ENCODE measurements at regions of chr7 and their contacts with region 1.

Region 1: GRCh38 chr7:130941322-130942210 is 207.6 kb upstream of the KLF14 start:
- DNase-seq: no peak
- ATAC-seq: peak; percentile 14
- H3K4me3 Mint-ChIP-seq: peak overlapping the region; percentile 77
- H3K27ac Mint-ChIP-seq: peak overlapping the region; percentile 95
- H3K4me1 Mint-ChIP-seq: peaks cover 91% of the 10 kb centered on the region
- H3K27me3 Mint-ChIP-seq: no peaks in the 10 kb centered on the region

Region 2: DNA sequence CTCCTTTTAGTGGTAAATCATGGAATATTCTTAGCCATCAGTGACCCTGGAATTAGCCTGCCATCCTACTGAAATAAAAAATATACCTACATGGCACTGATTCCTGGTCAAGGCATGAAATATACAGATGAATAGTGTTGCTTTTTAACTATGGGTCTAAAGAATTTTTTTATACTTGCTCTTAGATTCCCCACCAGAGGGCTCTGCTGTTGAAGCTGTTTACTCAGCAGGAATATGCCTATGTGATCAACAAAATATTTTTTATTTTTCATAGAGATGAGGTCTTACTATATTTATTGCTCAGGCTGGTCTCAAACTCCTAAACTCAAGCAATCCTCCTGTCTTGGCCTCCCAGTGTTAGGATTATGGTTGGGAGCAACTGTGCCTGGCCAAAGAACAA is 903.9 kb before region 1 on chr7:
- CTCF ChIA-PET with region 1: no interaction called
- DNase-seq: no peak
- ATAC-seq: no peak
- H3K4me3 Mint-ChIP-seq: no peak overlapping the region
- H3K27ac Mint-ChIP-seq: no peak overlapping the region
- H3K4me1 Mint-ChIP-seq: no peaks in the 10 kb centered on the region
- H3K27me3 Mint-ChIP-seq: no peaks in the 10 kb centered on the region

Region 3: GRCh38 chr7:130912862-130913631 is 28.5 kb before region 1 on chr7:
- CTCF ChIA-PET with region 1: interaction called, 24 read pairs
- DNase-seq: peak; percentile 92
- ATAC-seq: peak; percentile 83
- H3K4me3 Mint-ChIP-seq: peak overlapping the region; percentile 87
- H3K27ac Mint-ChIP-seq: peak overlapping the region; percentile 99
- H3K4me1 Mint-ChIP-seq: peaks cover 89% of the 10 kb centered on the region
- H3K27me3 Mint-ChIP-seq: no peaks in the 10 kb centered on the region

Region 4: DNA sequence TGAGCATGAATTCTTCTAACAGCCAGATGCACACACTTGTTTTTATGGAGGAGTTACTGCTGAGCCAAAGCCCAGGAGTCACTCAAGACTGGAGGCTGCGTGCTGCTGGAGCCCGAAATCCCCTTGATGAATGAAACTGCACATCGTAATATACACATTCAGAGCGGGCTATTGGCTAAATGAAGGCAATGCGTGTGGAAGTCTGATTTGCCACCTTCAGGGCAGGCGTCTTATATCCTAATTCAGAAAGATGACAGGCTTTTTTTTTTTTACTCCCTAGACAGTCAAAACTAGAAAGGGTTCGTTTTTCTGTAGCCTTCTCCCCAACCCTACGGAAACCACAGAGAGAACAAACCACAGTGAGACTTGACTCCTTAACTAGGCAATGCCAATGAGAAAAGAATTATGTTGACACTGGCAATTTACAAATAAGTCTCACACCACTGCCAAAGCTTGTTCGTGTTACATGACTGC is 19.6 kb after region 1 on chr7:
- CTCF ChIA-PET with region 1: interaction called, 79 read pairs
- DNase-seq: peak; percentile 93
- ATAC-seq: peak; percentile 82
- H3K4me3 Mint-ChIP-seq: peak overlapping the region; percentile 94
- H3K27ac Mint-ChIP-seq: peak overlapping the region; percentile 100
- H3K4me1 Mint-ChIP-seq: peaks cover 48% of the 10 kb centered on the region
- H3K27me3 Mint-ChIP-seq: no peaks in the 10 kb centered on the region

Measured in activated CD8-positive, alpha-beta memory T cell treated with anti-CD3 and anti-CD28 coated beads, Interleukin-2, amount 10 ng/mL, durations not matched to agents 7 days and 5 days (primary cell).